ENCODE measurements at regions of chr6 and their contacts with region 1.

Region 1: DNA sequence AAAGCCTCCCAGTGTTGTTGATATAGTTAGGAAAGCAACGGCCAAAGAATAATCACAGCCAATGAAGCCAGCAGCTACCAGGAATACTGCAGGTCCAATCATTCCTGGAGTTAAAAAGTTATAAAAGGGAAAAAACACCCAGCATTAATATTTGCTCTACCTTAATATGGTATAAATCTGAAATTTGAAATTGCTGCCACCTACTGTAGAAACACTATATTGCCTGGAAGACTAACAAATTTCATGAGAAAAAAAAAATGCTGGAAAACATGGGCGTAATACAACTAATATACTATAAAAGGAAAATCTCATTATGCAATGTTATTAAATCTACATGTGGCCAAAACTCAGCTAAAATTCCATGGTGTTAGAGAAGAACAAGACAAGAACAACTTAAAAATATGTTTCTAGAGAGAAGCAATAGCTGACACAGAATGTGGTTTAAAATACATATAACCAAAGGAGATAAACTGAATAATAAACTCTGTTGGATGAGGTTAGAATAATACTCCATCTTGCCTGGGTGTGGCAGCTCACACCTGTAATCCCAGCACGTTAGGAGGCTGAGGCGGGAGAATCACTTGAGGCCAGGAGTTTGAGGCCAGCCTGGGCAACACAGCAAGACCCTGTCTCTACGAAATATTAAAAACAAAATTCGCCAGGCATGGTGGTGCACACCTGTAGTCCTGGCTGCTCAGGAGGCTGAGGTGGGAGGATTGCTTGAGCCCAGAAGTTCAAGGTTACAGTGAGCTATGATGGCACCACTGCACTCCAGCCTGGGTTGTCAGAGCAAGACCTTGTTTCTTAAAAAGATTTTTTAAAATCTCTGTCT is 43.1 kb downstream of the SLC17A5 start:
- DNase-seq: peak; percentile 23
- ATAC-seq: peak; percentile 79
- H3K4me3 ChIP-seq: no peak overlapping the region
- H3K27ac ChIP-seq: no peak overlapping the region
- H3K4me1 ChIP-seq: no peaks in the 10 kb centered on the region
- H3K27me3 ChIP-seq: no peaks in the 10 kb centered on the region
- CTCF ChIP-seq: peak; percentile 37 to 66 (median 58); a peak in 5 of 6 replicates
- EP300 ChIP-seq: no peak
- POLR2A ChIP-seq: no peak
- RAD21 ChIP-seq: peak; percentile 74

Region 2: DNA sequence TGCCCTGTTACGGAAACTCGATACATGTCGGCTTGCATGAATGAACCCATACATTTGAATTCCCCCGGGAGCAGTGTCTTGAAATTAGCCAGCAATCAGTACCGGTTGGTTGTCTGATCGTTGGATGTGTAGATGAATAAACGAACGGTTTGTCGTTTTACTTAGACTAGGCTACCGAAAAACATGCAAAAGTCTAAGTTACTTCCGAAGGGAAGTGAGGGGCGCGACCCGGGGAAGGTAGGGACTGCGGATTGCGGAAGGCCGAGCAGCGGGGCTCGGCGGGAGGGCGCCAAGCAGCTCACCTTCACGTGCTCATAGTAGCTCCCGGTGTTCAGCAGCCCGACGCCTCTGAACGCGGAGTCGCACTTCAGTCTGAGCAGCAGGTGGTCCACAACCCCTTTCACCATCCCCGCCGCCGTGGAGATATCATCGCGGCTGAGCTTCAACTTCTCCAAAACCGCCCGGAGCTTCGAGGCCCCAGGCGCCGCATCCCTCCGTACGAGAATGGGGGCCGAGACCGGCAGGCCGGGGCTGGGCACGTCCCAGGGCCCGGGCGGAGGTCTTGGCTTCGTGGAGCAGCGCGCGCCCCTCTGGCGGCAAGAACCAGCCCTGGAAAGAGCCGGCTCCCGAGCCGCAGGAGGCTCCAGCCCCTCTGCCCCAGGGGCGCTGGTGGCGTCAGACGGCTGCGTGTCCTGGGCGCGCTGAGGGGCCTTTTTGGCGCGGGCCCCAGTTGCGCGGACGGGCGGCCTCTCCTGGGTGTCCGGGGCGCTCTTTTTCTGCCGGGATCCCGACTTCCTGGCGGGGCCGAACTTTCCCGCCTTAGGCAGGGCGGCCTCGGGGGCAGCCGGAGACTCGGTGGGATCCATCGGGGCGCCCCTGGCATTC is 159.2 kb before region 1 on chr6:
- CTCF ChIA-PET with region 1: interaction called, 9 read pairs
- POLR2A ChIA-PET with region 1: interaction called, 3 read pairs
- RAD21 ChIA-PET with region 1: interaction called, 3 read pairs
- SMC1A ChIA-PET with region 1: interaction called, 6 read pairs
- in situ Hi-C with region 1: no loop called
- intact Hi-C with region 1: loop called (anchors 5 kb)
- DNase-seq: no peak
- ATAC-seq: peak; percentile 72
- H3K4me3 ChIP-seq: peak overlapping the region; percentile 91
- H3K27ac ChIP-seq: peak overlapping the region; percentile 95
- H3K4me1 ChIP-seq: 0 out of 2 replicates have a peak, but pooled peaks cover 3% of the 10 kb centered on the region
- H3K27me3 ChIP-seq: no peaks in the 10 kb centered on the region
- CTCF ChIP-seq: no peak
- EP300 ChIP-seq: no peak
- POLR2A ChIP-seq: peak; percentile 84
- RAD21 ChIP-seq: no peak

Region 3: DNA sequence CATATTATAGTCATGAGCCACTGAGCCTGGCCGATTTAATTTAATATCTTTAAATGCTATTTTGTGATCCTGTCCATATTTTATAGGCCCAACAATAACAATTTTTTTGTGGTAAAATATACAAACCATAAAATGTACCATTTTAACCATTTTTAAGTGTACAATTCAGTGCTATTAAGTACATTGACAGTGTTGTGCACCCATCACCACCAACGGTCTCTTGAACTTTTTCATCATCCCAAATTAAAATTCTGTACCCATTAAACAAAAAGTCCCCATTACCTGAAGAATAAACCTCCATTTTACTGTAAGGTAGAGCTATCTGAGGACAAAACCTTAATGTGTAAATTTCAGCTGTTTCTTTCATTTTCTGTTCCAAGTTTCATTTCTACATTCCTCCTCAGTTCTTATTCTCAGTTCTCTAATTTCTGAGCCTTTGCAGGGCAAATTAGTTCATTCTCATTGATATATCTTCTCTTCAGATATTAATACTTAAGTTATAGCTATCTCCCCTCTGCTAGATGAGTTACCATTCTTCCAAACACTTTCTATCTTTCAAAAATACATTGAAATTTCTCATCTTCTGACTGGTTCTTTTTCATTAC is 138.9 kb before region 1 on chr6:
- CTCF ChIA-PET with region 1: interaction called, 4 read pairs
- POLR2A ChIA-PET with region 1: no interaction called
- RAD21 ChIA-PET with region 1: interaction called, 14 read pairs
- SMC1A ChIA-PET with region 1: interaction called, 4 read pairs
- in situ Hi-C with region 1: no loop called
- intact Hi-C with region 1: no loop called
- DNase-seq: peak; percentile 58
- ATAC-seq: peak; percentile 98
- H3K4me3 ChIP-seq: peak overlapping the region; percentile 48; the same call in 1 of the 2 replicates
- H3K27ac ChIP-seq: peak overlapping the region; percentile 90
- H3K4me1 ChIP-seq: peaks cover 15% of the 10 kb centered on the region
- H3K27me3 ChIP-seq: no peaks in the 10 kb centered on the region
- CTCF ChIP-seq: no peak
- EP300 ChIP-seq: peak; percentile 43 to 89; a peak in 3 of 4 replicates
- POLR2A ChIP-seq: no peak
- RAD21 ChIP-seq: no peak

Region 4: GRCh38 chr6:73503027-73503772 is 107.5 kb before region 1 on chr6:
- CTCF ChIA-PET with region 1: interaction called, 5 read pairs
- POLR2A ChIA-PET with region 1: no interaction called
- RAD21 ChIA-PET with region 1: no interaction called
- SMC1A ChIA-PET with region 1: interaction called, 15 read pairs
- in situ Hi-C with region 1: loop called (anchors 25 kb)
- intact Hi-C with region 1: no loop called
- DNase-seq: no peak
- ATAC-seq: no peak; the same call in 2 of the 3 replicates
- H3K4me3 ChIP-seq: no peak overlapping the region
- H3K27ac ChIP-seq: no peak overlapping the region
- H3K4me1 ChIP-seq: no peaks in the 10 kb centered on the region
- H3K27me3 ChIP-seq: no peaks in the 10 kb centered on the region
- CTCF ChIP-seq: no peak
- EP300 ChIP-seq: no peak
- POLR2A ChIP-seq: no peak
- RAD21 ChIP-seq: no peak

Region 5: GRCh38 chr6:73560182-73560732 is 50.4 kb before region 1 on chr6:
- CTCF ChIA-PET with region 1: interaction called, 12 read pairs
- POLR2A ChIA-PET with region 1: interaction called, 4 read pairs
- RAD21 ChIA-PET with region 1: interaction called, 15 read pairs
- SMC1A ChIA-PET with region 1: interaction called, 14 read pairs
- in situ Hi-C with region 1: no loop called
- intact Hi-C with region 1: no loop called
- DNase-seq: peak; percentile 30
- ATAC-seq: peak; percentile 65
- H3K4me3 ChIP-seq: peak overlapping the region; percentile 49; the same call in 1 of the 2 replicates
- H3K27ac ChIP-seq: peak overlapping the region; percentile 80
- H3K4me1 ChIP-seq: peaks cover 29% of the 10 kb centered on the region
- H3K27me3 ChIP-seq: no peaks in the 10 kb centered on the region
- CTCF ChIP-seq: no peak
- EP300 ChIP-seq: no peak
- POLR2A ChIP-seq: no peak
- RAD21 ChIP-seq: no peak

Region 6: DNA sequence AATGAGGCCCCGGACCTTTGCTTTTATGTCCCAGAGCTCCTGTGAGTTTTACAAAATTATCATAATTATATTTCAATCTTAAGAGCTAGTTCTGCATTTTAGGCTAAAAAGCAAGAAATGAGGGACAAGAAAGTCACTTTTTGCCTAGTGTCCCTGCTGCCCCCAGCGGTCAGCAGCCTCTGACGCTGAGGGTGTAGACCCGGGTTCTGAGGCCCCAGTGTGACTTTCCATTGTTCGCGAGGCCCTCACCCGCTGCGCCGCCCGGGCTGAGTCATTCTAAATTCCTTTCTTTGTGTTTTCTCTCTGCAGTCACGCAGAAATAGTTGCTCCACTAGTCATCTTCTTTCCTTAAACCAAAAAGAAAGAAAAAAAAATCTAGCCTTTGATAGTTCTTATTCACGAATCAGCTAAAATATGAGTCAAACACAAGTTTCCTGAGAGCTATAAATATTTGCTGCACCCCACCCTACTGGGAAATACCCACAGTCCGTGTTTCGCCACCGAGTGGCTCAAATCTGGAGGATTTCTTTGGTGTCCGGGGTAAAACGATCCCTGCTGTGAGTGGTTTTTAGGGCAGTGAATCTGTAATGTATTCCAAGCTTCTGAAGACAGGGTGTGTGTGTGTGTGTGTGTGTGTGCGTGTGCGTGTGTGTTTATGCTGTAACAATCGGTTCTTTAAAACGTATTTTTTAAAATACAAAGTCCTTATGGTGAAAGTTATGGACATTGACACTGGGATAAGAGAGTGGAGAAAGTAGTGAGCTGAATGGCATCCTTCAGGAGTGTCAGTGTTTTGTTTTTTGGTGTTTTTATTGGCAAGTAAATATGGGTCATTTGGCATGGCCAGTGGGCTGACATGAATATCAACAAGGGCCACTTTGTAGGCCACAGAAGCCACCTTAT is 30.2 kb before region 1 on chr6:
- CTCF ChIA-PET with region 1: interaction called, 11 read pairs
- POLR2A ChIA-PET with region 1: interaction called, 6 read pairs
- RAD21 ChIA-PET with region 1: interaction called, 7 read pairs
- SMC1A ChIA-PET with region 1: interaction called, 9 read pairs
- in situ Hi-C with region 1: no loop called
- intact Hi-C with region 1: no loop called
- DNase-seq: peak; percentile 61
- ATAC-seq: peak; percentile 92
- H3K4me3 ChIP-seq: peak overlapping the region; percentile 34; the same call in 1 of the 2 replicates
- H3K27ac ChIP-seq: peak overlapping the region; percentile 96
- H3K4me1 ChIP-seq: peaks cover 20% of the 10 kb centered on the region
- H3K27me3 ChIP-seq: no peaks in the 10 kb centered on the region
- CTCF ChIP-seq: peak; percentile 42 to 53 (median 46); a peak in 5 of 6 replicates
- EP300 ChIP-seq: no peak
- POLR2A ChIP-seq: peak; percentile 71
- RAD21 ChIP-seq: 0 out of 2 replicates have a peak, but pooled peaks have one; percentile 36

Region 7: GRCh38 chr6:73631849-73632248 is 21.2 kb after region 1 on chr6:
- CTCF ChIA-PET with region 1: interaction called, 15 read pairs
- POLR2A ChIA-PET with region 1: no interaction called
- RAD21 ChIA-PET with region 1: no interaction called
- SMC1A ChIA-PET with region 1: interaction called, 4 read pairs
- in situ Hi-C with region 1: no loop called
- intact Hi-C with region 1: no loop called
- DNase-seq: no peak
- ATAC-seq: no peak
- H3K4me3 ChIP-seq: no peak overlapping the region
- H3K27ac ChIP-seq: no peak overlapping the region
- H3K4me1 ChIP-seq: no peaks in the 10 kb centered on the region
- H3K27me3 ChIP-seq: no peaks in the 10 kb centered on the region
- CTCF ChIP-seq: no peak
- EP300 ChIP-seq: no peak
- POLR2A ChIP-seq: no peak
- RAD21 ChIP-seq: no peak

Region 8: DNA sequence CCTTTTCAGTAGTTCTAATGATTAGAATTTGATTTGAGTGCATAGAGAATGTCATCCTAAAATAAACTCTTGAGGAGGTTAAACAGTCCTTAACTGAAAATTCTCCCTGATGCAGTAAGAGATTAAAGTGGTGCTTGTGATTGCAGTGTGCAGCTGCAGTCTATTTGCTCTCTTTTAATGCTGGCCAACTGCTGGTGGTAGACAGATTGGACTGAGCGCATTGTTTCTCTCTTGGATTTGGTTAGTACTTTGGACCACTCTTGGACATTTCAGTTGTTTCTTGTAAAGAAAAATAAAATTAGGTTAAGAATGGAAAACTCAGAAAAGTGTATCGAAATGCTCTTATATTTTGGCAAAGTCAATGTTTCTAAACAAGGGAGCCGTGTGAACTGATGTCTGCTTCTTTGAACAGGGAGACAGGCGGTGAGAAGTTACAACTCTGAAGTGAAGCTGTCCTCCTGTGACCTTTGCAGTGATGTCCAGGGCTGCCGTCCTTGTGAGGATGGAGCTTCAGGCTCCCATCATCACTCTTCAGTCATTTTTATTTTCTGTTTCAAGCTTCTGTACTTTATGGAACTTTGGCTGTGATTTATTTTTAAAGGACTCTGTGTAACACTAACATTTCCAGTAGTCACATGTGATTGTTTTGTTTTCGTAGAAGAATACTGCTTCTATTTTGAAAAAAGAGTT is 212.5 kb after region 1 on chr6:
- CTCF ChIA-PET with region 1: no interaction called
- POLR2A ChIA-PET with region 1: no interaction called
- RAD21 ChIA-PET with region 1: no interaction called
- SMC1A ChIA-PET with region 1: no interaction called
- in situ Hi-C with region 1: no loop called
- intact Hi-C with region 1: no loop called
- DNase-seq: no peak
- ATAC-seq: no peak
- H3K4me3 ChIP-seq: no peak overlapping the region
- H3K27ac ChIP-seq: no peak overlapping the region
- H3K4me1 ChIP-seq: no peaks in the 10 kb centered on the region
- H3K27me3 ChIP-seq: peaks cover 0 to 2% of the 10 kb centered on the region in 2 experiments; a peak in 1 of 4 replicates
- CTCF ChIP-seq: no peak
- EP300 ChIP-seq: no peak
- POLR2A ChIP-seq: no peak
- RAD21 ChIP-seq: no peak